MCF 10A (cell line): ENCODE measurements at regions of chr11 and their contacts with region 1.

Region 1: DNA sequence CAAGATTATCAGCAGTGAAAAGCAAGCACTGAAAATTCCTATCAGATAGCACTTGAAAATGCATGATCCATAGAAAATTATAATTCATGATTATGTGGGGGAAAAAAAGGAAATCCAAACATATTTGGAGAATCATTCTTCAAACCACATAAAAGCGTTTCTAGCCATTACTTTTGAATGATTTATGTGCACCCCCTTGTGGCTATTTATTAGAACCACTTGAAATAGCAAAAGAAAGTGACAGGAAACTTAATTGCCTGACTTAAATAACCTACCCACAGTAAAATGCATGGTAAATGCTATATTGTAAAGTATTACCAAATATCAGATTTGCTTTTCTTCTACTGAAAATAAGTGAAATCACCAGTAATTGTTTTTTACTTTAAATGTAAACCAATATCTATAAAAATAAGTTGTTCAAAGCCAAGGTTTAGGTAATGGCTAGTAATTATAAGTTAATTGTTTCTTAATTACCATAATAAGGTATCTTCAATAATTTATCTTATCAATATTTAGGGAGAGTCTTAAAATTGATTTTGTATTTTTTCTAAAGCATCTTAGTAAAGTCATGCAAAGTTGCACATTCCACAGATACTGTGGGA is 168.5 kb downstream of the ARHGAP42 start:
- DNase-seq: peak; percentile 64
- H3K4me3 Mint-ChIP-seq: no peak overlapping the region
- H3K27ac Mint-ChIP-seq: no peak overlapping the region
- H3K4me1 Mint-ChIP-seq: no peaks in the 10 kb centered on the region
- H3K27me3 Mint-ChIP-seq: no peaks in the 10 kb centered on the region
- CTCF ChIP-seq: peak; percentile 57

Region 2: GRCh38 chr11:100575870-100576705 is 279.5 kb before region 1 on chr11:
- CTCF ChIA-PET with region 1: interaction called, 41 read pairs
- POLR2A ChIA-PET with region 1: no interaction called
- intact Hi-C with region 1: loop called (anchors 1 kb)
- DNase-seq: peak; percentile 63
- H3K4me3 Mint-ChIP-seq: no peak overlapping the region
- H3K27ac Mint-ChIP-seq: no peak overlapping the region
- H3K4me1 Mint-ChIP-seq: no peaks in the 10 kb centered on the region
- H3K27me3 Mint-ChIP-seq: peaks cover 22% of the 10 kb centered on the region
- CTCF ChIP-seq: peak; percentile 66

Region 3: DNA sequence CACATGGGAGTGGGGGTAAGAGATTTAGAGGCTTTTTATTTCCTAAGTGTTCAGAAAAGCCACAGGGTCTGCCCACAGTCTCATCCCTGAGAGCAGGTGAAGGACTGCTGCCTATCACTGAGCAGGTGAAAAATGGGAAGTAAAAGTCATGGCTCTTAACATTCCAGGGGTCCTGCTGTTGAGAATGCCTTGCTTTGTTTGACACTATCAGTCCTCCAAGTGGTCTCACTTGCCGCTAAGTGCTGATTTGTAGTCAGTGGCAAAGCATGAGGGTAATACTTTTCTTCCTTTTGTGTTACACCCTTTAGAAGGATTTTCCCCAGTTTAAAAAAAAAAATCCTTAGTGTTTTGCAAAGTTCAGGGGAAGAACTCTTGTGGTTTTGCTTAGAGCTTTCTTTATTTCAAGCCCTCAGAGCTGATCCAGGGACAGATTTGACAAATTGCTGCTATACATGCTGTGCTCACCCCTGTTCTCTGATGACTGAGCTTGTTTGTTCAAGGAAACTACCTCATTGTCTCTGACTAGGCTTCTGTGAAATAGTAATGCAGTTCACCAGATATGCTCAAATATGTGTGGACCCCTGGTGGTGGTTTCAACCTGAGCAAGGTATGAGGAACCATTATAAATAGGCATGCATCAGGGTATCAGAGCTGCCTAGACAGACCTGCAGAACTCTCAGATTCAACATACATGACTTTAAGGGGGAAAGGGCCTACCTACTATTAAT is 27.5 kb before region 1 on chr11:
- CTCF ChIA-PET with region 1: interaction called, 10 read pairs
- POLR2A ChIA-PET with region 1: no interaction called
- intact Hi-C with region 1: no loop called
- DNase-seq: peak; percentile 34
- H3K4me3 Mint-ChIP-seq: no peak overlapping the region
- H3K27ac Mint-ChIP-seq: no peak overlapping the region
- H3K4me1 Mint-ChIP-seq: peaks cover 19% of the 10 kb centered on the region
- H3K27me3 Mint-ChIP-seq: no peaks in the 10 kb centered on the region
- CTCF ChIP-seq: no peak

Region 4: GRCh38 chr11:100930185-100930778 is 74.7 kb after region 1 on chr11:
- CTCF ChIA-PET with region 1: interaction called, 4 read pairs
- POLR2A ChIA-PET with region 1: no interaction called
- intact Hi-C with region 1: loop called (anchors 2 kb)
- DNase-seq: peak; percentile 68
- H3K4me3 Mint-ChIP-seq: no peak overlapping the region
- H3K27ac Mint-ChIP-seq: no peak overlapping the region
- H3K4me1 Mint-ChIP-seq: no peaks in the 10 kb centered on the region
- H3K27me3 Mint-ChIP-seq: no peaks in the 10 kb centered on the region
- CTCF ChIP-seq: peak; percentile 73